ENCODE measurements at regions of chr12 and their contacts with region 1.

Region 1: GRCh38 chr12:120265473-120266179 is at the start of gene PXN:
- DNase-seq: peak; percentile 83 to 98 (median 91)
- ATAC-seq: peak; percentile 99
- H3K4me3 ChIP-seq: peak within 1 kb of the TSS; percentile 76
- H3K4me3 Mint-ChIP-seq: peak within 1 kb of the TSS; percentile 89 to 100 (median 93)
- H3K27ac ChIP-seq: peak within 1 kb of the TSS; percentile 91
- H3K27ac Mint-ChIP-seq: peak within 1 kb of the TSS; percentile 86 to 97 (median 93)
- H3K4me1 ChIP-seq: peaks cover 29 to 40% of the 10 kb centered on the region in 2 donors
- H3K4me1 Mint-ChIP-seq: peaks cover 17 to 46% (median 33%) of the 10 kb centered on the region in 7 donors
- H3K27me3 ChIP-seq: no peaks in the 10 kb centered on the region
- H3K27me3 Mint-ChIP-seq: no peaks in the 10 kb centered on the region
- total RNA-seq, gene PXN: 103 to 202 (median 158) TPM

Region 2: GRCh38 chr12:120200364-120200800 is 65.2 kb before region 1 on chr12:
- CTCF ChIA-PET with region 1: interaction called, 18 read pairs
- POLR2A ChIA-PET with region 1: interaction called, 63 read pairs
- intact Hi-C with region 1: loop called (anchors 1 kb)
- DNase-seq: no peak
- ATAC-seq: no peak
- H3K4me3 ChIP-seq: peak overlapping the region; percentile 98
- H3K4me3 Mint-ChIP-seq: peak overlapping the region; percentile 92 to 99 (median 96)
- H3K27ac ChIP-seq: peak overlapping the region; percentile 84
- H3K27ac Mint-ChIP-seq: peak overlapping the region; percentile 94 to 100 (median 97)
- H3K4me1 ChIP-seq: peaks cover 18 to 20% of the 10 kb centered on the region in 2 donors
- H3K4me1 Mint-ChIP-seq: peaks cover 20 to 53% (median 38%) of the 10 kb centered on the region in 7 donors
- H3K27me3 ChIP-seq: no peaks in the 10 kb centered on the region
- H3K27me3 Mint-ChIP-seq: no peaks in the 10 kb centered on the region

Region 3: DNA sequence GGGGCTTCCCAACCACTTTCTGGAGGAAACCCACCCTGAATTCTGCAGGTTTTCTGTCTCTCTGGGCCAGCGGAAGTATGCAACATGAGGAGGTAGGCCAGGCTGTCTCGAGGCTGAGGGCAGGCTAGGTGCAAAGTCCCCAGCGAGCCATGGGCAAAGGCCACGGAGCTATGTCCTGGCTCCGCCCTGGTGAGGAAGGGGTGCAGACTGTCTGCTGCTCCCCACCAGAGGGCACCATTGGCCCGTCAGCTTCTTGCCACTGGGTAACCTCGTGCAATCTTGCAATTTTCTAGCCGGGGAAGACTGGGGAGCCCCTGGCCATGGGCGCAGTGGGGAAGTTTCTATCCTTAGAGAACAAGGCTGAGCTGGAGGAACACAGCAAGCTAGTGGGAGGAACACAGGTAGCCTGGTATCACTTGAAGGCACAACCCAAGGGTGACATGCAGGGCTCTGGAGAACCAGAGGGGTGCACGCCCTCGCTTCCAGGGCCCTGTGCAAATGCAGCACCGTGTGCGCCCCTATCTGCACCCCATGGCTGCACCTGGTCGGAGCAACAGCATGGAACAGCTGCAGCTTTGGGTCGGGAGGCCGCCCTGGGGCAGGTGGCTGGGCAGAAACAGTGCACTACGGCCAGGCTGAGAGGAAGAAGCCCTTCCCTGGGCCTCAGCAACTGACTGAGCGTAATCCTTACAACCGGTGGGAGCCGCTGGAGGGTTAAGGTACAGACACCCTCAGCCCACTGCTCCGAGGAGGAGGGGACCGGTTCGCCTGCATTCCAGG is 37.1 kb before region 1 on chr12:
- CTCF ChIA-PET with region 1: interaction called, 286 read pairs
- POLR2A ChIA-PET with region 1: interaction called, 215 read pairs
- intact Hi-C with region 1: loop called (anchors 1 kb)
- DNase-seq: peak; percentile 77 to 90 (median 86)
- ATAC-seq: peak; percentile 86
- H3K4me3 ChIP-seq: peak overlapping the region; percentile 21
- H3K4me3 Mint-ChIP-seq: peak overlapping the region; percentile 72 to 89 (median 78)
- H3K27ac ChIP-seq: peak overlapping the region; percentile 61
- H3K27ac Mint-ChIP-seq: peak overlapping the region in 8 of 9 donors; percentile 74 to 94 (median 87)
- H3K4me1 ChIP-seq: peaks cover 57 to 72% of the 10 kb centered on the region in 2 donors
- H3K4me1 Mint-ChIP-seq: peaks cover 58 to 89% (median 82%) of the 10 kb centered on the region in 7 donors
- H3K27me3 ChIP-seq: no peaks in the 10 kb centered on the region
- H3K27me3 Mint-ChIP-seq: no peaks in the 10 kb centered on the region

Region 4: GRCh38 chr12:120234643-120235368 is 30.8 kb before region 1 on chr12:
- CTCF ChIA-PET with region 1: interaction called, 286 read pairs
- POLR2A ChIA-PET with region 1: interaction called, 215 read pairs
- intact Hi-C with region 1: loop called in 1 of 2 experiments (anchors 1 kb)
- DNase-seq: no peak
- ATAC-seq: peak; percentile 7
- H3K4me3 ChIP-seq: no peak overlapping the region
- H3K4me3 Mint-ChIP-seq: peak overlapping the region in 2 of 10 donors; percentile 37 to 65
- H3K27ac ChIP-seq: peak overlapping the region; percentile 41
- H3K27ac Mint-ChIP-seq: peak overlapping the region; percentile 4 to 98 (median 92)
- H3K4me1 ChIP-seq: peaks cover 57 to 73% of the 10 kb centered on the region in 2 donors
- H3K4me1 Mint-ChIP-seq: peaks cover 56 to 94% (median 82%) of the 10 kb centered on the region in 7 donors
- H3K27me3 ChIP-seq: no peaks in the 10 kb centered on the region
- H3K27me3 Mint-ChIP-seq: no peaks in the 10 kb centered on the region

Region 5: DNA sequence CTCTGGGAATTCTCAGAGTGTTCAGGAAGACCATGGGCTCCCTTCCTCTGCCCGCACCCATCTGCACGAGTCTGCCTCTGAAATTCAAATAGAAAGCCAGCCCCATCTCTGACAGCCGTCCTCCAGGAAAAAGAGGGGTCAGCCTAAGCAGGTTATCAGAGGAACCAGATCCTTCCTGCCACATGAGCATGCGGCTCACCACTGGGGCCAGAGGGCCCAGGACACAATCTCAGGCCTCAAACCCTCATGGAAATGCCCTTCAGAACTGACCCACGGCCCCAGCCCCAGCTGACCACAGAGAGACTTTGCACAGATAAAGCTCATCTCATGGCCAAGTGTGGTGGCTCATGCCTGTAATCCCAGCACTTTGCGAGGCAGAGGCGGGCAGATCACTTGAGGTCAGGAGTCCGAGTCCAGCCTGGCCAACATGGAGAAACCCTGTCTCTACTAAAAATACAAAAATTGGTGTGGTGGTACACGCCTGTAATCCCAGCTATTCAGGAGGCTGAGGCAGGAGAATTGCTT is 23.3 kb before region 1 on chr12:
- CTCF ChIA-PET with region 1: interaction called, 19 read pairs
- POLR2A ChIA-PET with region 1: interaction called, 235 read pairs
- intact Hi-C with region 1: no loop called
- DNase-seq: no peak
- ATAC-seq: peak; percentile 28
- H3K4me3 ChIP-seq: no peak overlapping the region
- H3K4me3 Mint-ChIP-seq: peak overlapping the region in 4 of 10 donors; percentile 9 to 59 (median 43)
- H3K27ac ChIP-seq: no peak overlapping the region
- H3K27ac Mint-ChIP-seq: peak overlapping the region in 5 of 9 donors; percentile 30 to 75 (median 53)
- H3K4me1 ChIP-seq: peaks cover 48 to 62% of the 10 kb centered on the region in 2 donors
- H3K4me1 Mint-ChIP-seq: peaks cover 45 to 84% (median 74%) of the 10 kb centered on the region in 7 donors
- H3K27me3 ChIP-seq: no peaks in the 10 kb centered on the region
- H3K27me3 Mint-ChIP-seq: no peaks in the 10 kb centered on the region

Region 6: DNA sequence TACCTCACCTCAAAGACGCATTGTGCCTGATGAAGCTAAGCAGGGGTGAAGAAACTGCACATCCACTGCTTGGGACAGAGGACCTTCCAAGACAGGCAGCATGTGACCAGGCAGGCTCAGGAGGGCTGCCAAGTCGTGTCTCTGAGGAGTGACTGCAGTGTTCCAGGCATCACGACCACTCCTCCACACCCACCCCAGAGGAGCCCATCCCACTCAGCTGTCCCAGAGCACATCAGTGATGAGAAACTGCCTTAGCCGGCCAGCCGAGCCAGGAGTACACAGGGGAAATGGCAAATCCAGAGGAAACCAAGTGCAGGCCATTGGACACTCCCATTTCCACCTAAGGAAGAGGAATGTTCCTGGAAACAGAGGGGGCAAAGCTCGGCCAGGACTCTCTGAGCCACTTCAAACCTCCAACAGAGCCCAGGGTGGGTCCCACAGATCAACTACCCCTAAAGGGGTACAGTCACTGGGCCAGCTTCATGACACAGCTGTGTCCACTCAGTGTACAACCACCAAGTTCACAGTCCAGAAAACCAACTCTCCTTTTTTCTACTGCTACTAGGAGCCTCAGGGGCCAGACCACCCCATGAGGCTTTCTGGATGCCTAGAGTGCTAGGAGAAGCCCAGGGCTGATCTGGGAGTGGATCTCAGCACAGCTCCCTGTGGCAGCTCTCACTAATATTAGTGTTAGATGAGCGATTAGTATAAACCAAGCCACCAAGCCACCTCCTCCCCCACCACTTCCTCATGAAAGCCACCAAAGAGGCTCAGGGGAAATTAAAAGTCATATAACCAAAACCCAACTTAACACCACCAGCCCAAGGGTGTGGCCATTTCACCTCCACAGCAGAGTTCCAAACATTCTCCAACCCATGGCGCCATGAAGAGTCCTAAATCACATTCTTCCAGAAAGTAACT is 15.5 kb before region 1 on chr12:
- CTCF ChIA-PET with region 1: interaction called, 48 read pairs
- POLR2A ChIA-PET with region 1: interaction called, 235 read pairs
- intact Hi-C with region 1: loop called (anchors 1 kb)
- DNase-seq: peak in 1 of 9 donors; percentile 37
- ATAC-seq: no peak
- H3K4me3 ChIP-seq: peak overlapping the region; percentile 46
- H3K4me3 Mint-ChIP-seq: peak overlapping the region; percentile 74 to 86 (median 84)
- H3K27ac ChIP-seq: peak overlapping the region; percentile 55
- H3K27ac Mint-ChIP-seq: peak overlapping the region; percentile 88 to 99 (median 96)
- H3K4me1 ChIP-seq: peaks cover 71 to 82% of the 10 kb centered on the region in 2 donors
- H3K4me1 Mint-ChIP-seq: peaks cover 68 to 92% (median 81%) of the 10 kb centered on the region in 7 donors
- H3K27me3 ChIP-seq: no peaks in the 10 kb centered on the region
- H3K27me3 Mint-ChIP-seq: no peaks in the 10 kb centered on the region

Region 7: DNA sequence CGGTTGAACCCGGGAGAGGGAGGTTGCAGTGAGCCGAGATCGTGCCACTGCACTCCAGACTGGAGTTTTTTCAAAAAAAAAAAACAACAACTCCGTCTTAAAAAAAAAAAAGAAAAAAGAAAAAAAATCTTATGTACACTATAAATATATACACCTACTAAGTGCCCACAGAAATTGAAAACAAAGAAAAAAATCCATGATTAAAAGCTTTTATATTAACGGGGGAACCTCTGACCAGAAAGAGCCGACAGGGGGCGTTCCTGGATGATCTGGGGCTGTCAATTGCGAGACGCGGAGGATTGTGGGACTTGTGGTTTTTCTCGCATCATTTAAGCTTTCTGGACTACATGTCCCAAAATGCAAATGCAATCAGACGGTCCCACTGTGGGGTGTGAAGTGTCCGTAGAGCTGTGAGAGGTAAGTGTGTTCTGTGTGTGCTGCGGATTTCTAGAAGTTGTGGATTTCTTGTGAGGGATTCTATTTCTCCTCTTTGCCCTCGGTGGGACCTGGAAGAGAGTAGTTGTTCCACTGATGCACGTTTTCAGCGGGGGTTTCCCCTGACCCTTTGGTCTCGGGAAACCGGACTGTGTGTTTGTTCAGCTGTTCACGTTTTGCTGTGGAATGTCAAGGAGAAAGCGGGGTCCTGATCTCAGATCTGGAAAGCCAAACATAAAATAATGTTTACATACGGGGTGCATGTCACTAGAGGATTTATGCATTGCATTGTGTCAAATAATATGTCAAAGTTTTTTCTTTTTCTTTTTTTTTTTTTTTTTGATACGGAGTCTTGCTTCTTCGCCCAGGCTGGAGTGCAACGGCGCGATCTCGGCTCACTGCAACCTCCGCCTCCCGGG is 36.6 kb after region 1 on chr12 and contains the start of gene SIRT4:
- CTCF ChIA-PET with region 1: interaction called, 6 read pairs
- POLR2A ChIA-PET with region 1: interaction called, 3 read pairs
- intact Hi-C with region 1: loop called in 1 of 2 experiments (anchors 1 kb)
- DNase-seq: peak; percentile 65 to 90 (median 87)
- ATAC-seq: peak; percentile 100
- H3K4me3 ChIP-seq: peak within 1 kb of the TSS; percentile 98
- H3K4me3 Mint-ChIP-seq: peak within 1 kb of the TSS; percentile 87 to 100 (median 96)
- H3K27ac ChIP-seq: peak within 1 kb of the TSS; percentile 72
- H3K27ac Mint-ChIP-seq: peak within 1 kb of the TSS; percentile 69 to 96 (median 87)
- H3K4me1 ChIP-seq: peaks cover 0 to 4% of the 10 kb centered on the region in 2 donors
- H3K4me1 Mint-ChIP-seq: peaks cover 0 to 16% (median 10%) of the 10 kb centered on the region in 7 donors
- H3K27me3 ChIP-seq: no peaks in the 10 kb centered on the region
- H3K27me3 Mint-ChIP-seq: no peaks in the 10 kb centered on the region
- total RNA-seq, gene SIRT4: 1.6 to 6.0 (median 4.0) TPM

Region 8: GRCh38 chr12:120346681-120347080 is 81.1 kb after region 1 on chr12:
- CTCF ChIA-PET with region 1: no interaction called
- POLR2A ChIA-PET with region 1: no interaction called
- intact Hi-C with region 1: no loop called
- DNase-seq: no peak
- ATAC-seq: no peak
- H3K4me3 ChIP-seq: no peak overlapping the region
- H3K4me3 Mint-ChIP-seq: no peak overlapping the region
- H3K27ac ChIP-seq: no peak overlapping the region
- H3K27ac Mint-ChIP-seq: no peak overlapping the region
- H3K4me1 ChIP-seq: no peaks in the 10 kb centered on the region
- H3K4me1 Mint-ChIP-seq: no peaks in the 10 kb centered on the region
- H3K27me3 ChIP-seq: no peaks in the 10 kb centered on the region
- H3K27me3 Mint-ChIP-seq: peaks cover 0 to 6% (median 0%) of the 10 kb centered on the region in 5 donors